Activated B cell treated with CpG ODN at 0.5 μM for 24 hours (primary cell): ENCODE measurements at regions of chr1 and their contacts with region 1.

Region 1: GRCh38 chr1:31605908-31606427 is 11.5 kb upstream of the HCRTR1 start:
- DNase-seq: peak; percentile 26
- ATAC-seq: peak; percentile 97
- H3K4me3 Mint-ChIP-seq: peak overlapping the region; percentile 28
- H3K27ac Mint-ChIP-seq: peak overlapping the region; percentile 86
- H3K4me1 Mint-ChIP-seq: peaks cover 19% of the 10 kb centered on the region
- H3K27me3 Mint-ChIP-seq: no peaks in the 10 kb centered on the region
- CTCF ChIP-seq: no peak

Region 2: DNA sequence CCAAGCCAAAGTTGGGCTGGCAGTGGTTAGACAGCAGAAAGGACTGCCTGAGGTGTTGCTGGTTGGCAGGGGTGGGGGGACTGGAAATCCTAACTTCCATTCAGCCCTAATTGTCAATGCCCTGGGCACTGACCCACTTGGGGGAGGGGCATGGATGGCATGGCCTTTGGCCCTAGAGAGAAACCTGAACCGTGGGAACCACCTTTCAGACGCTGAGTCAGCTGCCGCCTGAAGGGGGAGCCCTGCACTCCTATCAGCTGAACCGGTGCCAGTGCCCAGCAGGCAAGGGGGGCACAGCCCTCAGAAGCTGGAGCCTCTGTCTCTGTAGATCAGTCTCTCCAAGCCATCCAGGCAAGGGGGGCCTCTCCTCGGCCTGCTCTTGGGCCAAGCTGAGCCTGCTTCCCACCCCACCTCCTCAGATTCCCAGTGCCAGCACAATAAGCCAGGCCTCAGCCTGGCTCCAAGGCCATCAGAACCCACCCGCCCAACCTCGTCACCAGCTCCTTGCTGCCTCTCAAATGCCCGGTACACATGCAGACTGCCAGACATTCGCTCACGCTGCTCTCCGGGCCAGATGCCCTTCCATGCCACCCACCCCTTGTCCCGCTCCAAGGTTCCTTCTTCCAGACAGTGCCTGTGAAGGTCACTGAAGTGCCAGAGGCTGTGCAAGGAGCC is 18.1 kb before region 1 on chr1:
- CTCF ChIA-PET with region 1: interaction called, 4 read pairs
- POLR2A ChIA-PET with region 1: interaction called, 3 read pairs
- intact Hi-C with region 1: loop called (anchors 2 kb)
- DNase-seq: peak; percentile 46
- ATAC-seq: peak; percentile 80
- H3K4me3 Mint-ChIP-seq: no peak overlapping the region
- H3K27ac Mint-ChIP-seq: no peak overlapping the region
- H3K4me1 Mint-ChIP-seq: peaks cover 10% of the 10 kb centered on the region
- H3K27me3 Mint-ChIP-seq: peaks cover 26% of the 10 kb centered on the region
- CTCF ChIP-seq: no peak

Region 3: DNA sequence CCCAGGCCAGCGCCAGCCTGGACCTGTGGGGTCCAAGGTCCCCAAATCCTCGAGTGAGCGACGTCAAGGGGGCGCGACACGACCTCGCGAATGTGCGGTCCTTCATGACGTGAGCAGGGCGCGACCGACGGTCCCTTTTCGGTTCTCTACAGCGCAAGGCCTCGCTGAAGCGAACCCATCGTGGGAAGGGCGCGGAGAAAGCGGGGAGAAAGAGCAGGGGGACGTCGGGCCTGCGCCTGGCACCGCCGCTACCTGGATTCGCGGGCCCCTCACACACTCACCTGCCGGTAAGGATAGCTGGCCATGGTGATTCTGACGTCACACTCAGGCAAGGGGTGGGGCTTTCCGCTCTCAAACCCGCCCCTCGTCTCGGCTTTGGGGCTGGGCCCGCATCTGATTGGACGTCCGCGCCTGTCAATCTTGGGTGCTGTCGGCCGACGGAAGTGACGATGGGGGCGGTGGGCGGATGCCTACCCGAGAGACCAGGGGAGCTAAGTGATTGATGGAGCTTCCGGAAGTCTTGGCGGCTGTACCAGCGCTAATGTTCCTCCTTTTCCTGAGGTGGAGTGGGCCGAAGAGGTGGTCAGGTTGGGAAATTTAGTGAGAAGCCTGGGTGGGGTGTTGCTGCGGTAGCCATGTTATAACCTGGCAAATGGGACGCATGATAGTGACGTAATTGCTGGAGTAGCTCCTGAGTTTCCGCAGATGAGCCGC is 38.7 kb after region 1 on chr1 and contains the start of gene PEF1:
- CTCF ChIA-PET with region 1: no interaction called
- POLR2A ChIA-PET with region 1: interaction called, 5 read pairs
- intact Hi-C with region 1: loop called (anchors 2 kb)
- DNase-seq: peak; percentile 98
- ATAC-seq: peak; percentile 90
- H3K4me3 Mint-ChIP-seq: peak within 1 kb of the TSS; percentile 100
- H3K27ac Mint-ChIP-seq: peak within 1 kb of the TSS; percentile 100
- H3K4me1 Mint-ChIP-seq: peaks cover 32% of the 10 kb centered on the region
- H3K27me3 Mint-ChIP-seq: no peaks in the 10 kb centered on the region
- CTCF ChIP-seq: no peak
- total RNA-seq, gene PEF1: 58.0 and 61.1 TPM in 2 replicates